GM12878 (cell line): ENCODE measurements at regions of chr4 and their contacts with region 1.

Region 1: GRCh38 chr4:39621582-39621981 is 17.1 kb downstream of the SMIM14 start:
- DNase-seq: no peak
- ATAC-seq: no peak
- H3K4me3 ChIP-seq: no peak overlapping the region
- H3K27ac ChIP-seq: no peak overlapping the region
- H3K4me1 ChIP-seq: peaks cover 38% of the 10 kb centered on the region
- H3K27me3 ChIP-seq: no peaks in the 10 kb centered on the region
- CTCF ChIP-seq: no peak
- EP300 ChIP-seq: no peak
- POLR2A ChIP-seq: no peak
- RAD21 ChIP-seq: no peak

Region 2: GRCh38 chr4:39609454-39609931 is 12.1 kb before region 1 on chr4:
- CTCF ChIA-PET with region 1: interaction called, 65 read pairs
- POLR2A ChIA-PET with region 1: interaction called, 104 read pairs
- RAD21 ChIA-PET with region 1: interaction called, 79 read pairs
- SMC1A ChIA-PET with region 1: interaction called, 254 read pairs
- in situ Hi-C with region 1: no loop called
- intact Hi-C with region 1: loop called (anchors 1 kb)
- DNase-seq: peak; percentile 96
- ATAC-seq: peak; percentile 91
- H3K4me3 ChIP-seq: 0 out of 2 replicates have a peak overlapping the region, but pooled peaks have one; percentile 39
- H3K27ac ChIP-seq: peak overlapping the region; percentile 80
- H3K4me1 ChIP-seq: peaks cover 49% of the 10 kb centered on the region
- H3K27me3 ChIP-seq: no peaks in the 10 kb centered on the region
- CTCF ChIP-seq: no peak
- EP300 ChIP-seq: peak; percentile 97 to 100
- POLR2A ChIP-seq: 0 out of 2 replicates have a peak, but pooled peaks have one; percentile 29
- RAD21 ChIP-seq: no peak; the same call in 1 of the 2 replicates

Region 3: GRCh38 chr4:39814403-39815185 is 193.0 kb after region 1 on chr4:
- CTCF ChIA-PET with region 1: no interaction called
- POLR2A ChIA-PET with region 1: no interaction called
- RAD21 ChIA-PET with region 1: no interaction called
- SMC1A ChIA-PET with region 1: no interaction called
- in situ Hi-C with region 1: no loop called
- intact Hi-C with region 1: no loop called
- DNase-seq: no peak
- ATAC-seq: peak; percentile 49; the same call in 2 of the 3 replicates
- H3K4me3 ChIP-seq: no peak overlapping the region
- H3K27ac ChIP-seq: no peak overlapping the region
- H3K4me1 ChIP-seq: no peaks in the 10 kb centered on the region
- H3K27me3 ChIP-seq: no peaks in the 10 kb centered on the region
- CTCF ChIP-seq: no peak
- EP300 ChIP-seq: no peak
- POLR2A ChIP-seq: no peak
- RAD21 ChIP-seq: no peak